ENCODE measurements at regions of chr10 and their contacts with region 1.

Region 1: DNA sequence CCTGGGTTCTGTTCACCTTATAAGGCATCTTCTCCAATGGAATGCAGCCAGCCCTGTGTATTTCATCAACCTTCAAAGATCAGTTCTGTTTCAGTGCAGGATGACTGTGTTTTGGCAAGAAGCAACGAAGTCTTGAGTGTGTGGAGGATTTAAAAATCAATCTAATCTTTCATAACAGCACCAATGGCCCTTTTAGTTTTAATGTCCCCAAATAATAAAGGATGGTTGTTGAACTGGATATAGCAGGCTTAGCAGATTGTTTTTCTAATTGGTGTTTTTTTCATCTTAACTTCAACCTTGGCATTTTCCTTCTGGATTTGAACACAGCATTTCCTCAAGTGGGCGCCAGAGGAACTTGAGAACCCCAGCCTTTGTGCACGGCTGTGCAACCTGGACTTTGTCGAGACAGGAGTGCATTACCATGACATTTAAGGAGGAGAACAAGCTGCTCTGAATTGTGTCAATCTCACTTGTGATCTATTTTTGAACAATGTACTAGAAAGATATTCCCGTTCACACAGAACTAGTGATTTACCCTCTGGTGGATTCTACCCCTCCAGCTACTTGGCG is 313.3 kb upstream of the AKR1E2 start:
- DNase-seq: peak; percentile 52 to 64
- H3K4me3 ChIP-seq: no peak overlapping the region
- H3K27ac ChIP-seq: no peak overlapping the region
- H3K4me1 ChIP-seq: peaks cover 0 to 20% of the 10 kb centered on the region in 2 donors
- H3K27me3 ChIP-seq: no peaks in the 10 kb centered on the region
- CTCF ChIP-seq: peak in 4 of 6 experiments; percentile 33 to 60 (median 50)
- POLR2A ChIP-seq: no peak

Region 2: DNA sequence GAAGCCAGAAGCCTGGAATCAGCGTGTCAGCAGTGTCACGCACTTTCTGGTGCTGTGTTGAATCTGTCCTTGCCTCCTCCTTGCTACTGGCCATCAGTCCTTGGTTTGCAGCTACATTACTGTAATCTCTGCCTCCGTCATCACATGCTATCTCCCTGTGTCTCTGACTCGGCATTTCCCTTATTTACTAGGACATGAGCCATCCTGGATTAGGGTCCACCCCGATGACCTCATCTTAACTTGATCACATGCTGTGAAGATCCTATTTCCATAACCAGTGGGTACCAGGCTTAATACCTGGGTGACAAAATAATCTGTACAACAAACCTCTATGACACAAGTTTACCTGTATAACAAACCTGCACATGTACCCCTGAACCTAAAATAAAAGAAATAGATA is 209.7 kb before region 1 on chr10:
- intact Hi-C with region 1: no loop called
- DNase-seq: no peak
- H3K4me3 ChIP-seq: no peak overlapping the region
- H3K27ac ChIP-seq: no peak overlapping the region
- H3K4me1 ChIP-seq: peaks cover 0 to 11% of the 10 kb centered on the region in 2 donors
- H3K27me3 ChIP-seq: no peaks in the 10 kb centered on the region
- CTCF ChIP-seq: no peak
- POLR2A ChIP-seq: no peak

Region 3: GRCh38 chr10:4656576-4657182 is 143.9 kb after region 1 on chr10:
- intact Hi-C with region 1: loop called (anchors 10 kb)
- DNase-seq: peak; percentile 57 to 71
- H3K4me3 ChIP-seq: no peak overlapping the region
- H3K27ac ChIP-seq: no peak overlapping the region
- H3K4me1 ChIP-seq: peaks cover 0 to 10% of the 10 kb centered on the region in 2 donors
- H3K27me3 ChIP-seq: no peaks in the 10 kb centered on the region
- CTCF ChIP-seq: peak; percentile 67 to 92 (median 86)
- POLR2A ChIP-seq: no peak

Measured in thyroid gland (tissue), 4 donors.